Heart left ventricle (tissue), 16 donors: ENCODE measurements at regions of chr1 and their contacts with region 1.

Region 1: GRCh38 chr1:174413632-174414031 is 34.1 kb upstream of the GPR52 start:
- DNase-seq: no peak
- ATAC-seq: peak in 3 of 4 donors; percentile 29 to 42 (median 41)
- H3K4me3 ChIP-seq: peak overlapping the region in 3 of 12 donors; percentile 1 to 34 (median 24)
- H3K27ac ChIP-seq: no peak overlapping the region
- H3K4me1 ChIP-seq: peaks cover 0 to 5% (median 0%) of the 10 kb centered on the region in 12 donors
- H3K27me3 ChIP-seq: no peaks in the 10 kb centered on the region
- CTCF ChIP-seq: peak in 10 of 12 donors; percentile 5 to 48 (median 28)
- POLR2A ChIP-seq: no peak

Region 2: GRCh38 chr1:174217787-174218574 is 195.7 kb before region 1 on chr1:
- intact Hi-C with region 1: no loop called
- DNase-seq: no peak
- ATAC-seq: peak in 2 of 4 donors; percentile 62 to 70
- H3K4me3 ChIP-seq: no peak overlapping the region
- H3K27ac ChIP-seq: peak overlapping the region in 2 of 12 donors; percentile 5 to 34
- H3K4me1 ChIP-seq: peaks cover 0 to 19% (median 3%) of the 10 kb centered on the region in 12 donors
- H3K27me3 ChIP-seq: no peaks in the 10 kb centered on the region
- CTCF ChIP-seq: peak; percentile 62 to 86 (median 76)
- POLR2A ChIP-seq: no peak

Region 3: DNA sequence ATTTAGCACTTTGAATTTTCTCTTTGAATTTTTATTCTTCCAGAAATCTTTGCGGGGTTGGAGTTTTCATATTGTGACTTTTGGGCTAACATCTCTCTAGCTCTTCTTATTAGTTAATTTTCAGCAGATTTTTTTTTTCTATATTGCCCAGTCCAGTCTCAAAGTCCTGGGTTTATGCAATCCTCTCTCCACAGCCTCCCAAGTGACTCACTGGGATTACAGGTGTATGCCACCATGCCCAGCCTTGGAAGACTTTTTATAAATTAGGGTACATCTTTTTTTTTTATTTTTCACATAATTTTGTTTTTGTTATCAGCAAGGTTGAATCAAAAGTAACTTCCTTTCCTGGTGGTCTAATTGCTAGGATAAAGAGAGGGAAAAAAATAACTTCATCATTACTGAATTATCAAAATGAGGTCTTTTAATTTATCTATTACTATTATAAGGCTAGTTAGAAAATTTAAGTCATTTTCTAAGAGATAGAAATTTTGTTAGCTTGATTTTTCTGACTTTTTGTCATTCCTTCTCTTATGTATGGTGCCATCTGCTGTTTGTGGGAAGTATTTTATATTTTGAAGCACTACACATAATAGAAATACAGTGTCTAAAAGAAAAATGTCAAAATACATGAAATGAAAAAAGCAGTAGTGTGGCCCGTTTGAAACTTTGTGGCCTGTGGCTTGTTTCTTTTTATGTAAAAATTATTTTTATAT is 312.7 kb after region 1 on chr1:
- intact Hi-C with region 1: loop called in 7 of 10 experiments (anchors 10 kb)
- DNase-seq: no peak
- ATAC-seq: no peak
- H3K4me3 ChIP-seq: no peak overlapping the region
- H3K27ac ChIP-seq: no peak overlapping the region
- H3K4me1 ChIP-seq: peaks cover 0 to 4% (median 0%) of the 10 kb centered on the region in 12 donors
- H3K27me3 ChIP-seq: no peaks in the 10 kb centered on the region
- CTCF ChIP-seq: peak; percentile 22 to 68 (median 55)
- POLR2A ChIP-seq: no peak

Region 4: GRCh38 chr1:174736831-174737230 is 323.2 kb after region 1 on chr1:
- intact Hi-C with region 1: loop called in 2 of 10 experiments (anchors 10 kb)
- DNase-seq: no peak
- ATAC-seq: no peak
- H3K4me3 ChIP-seq: no peak overlapping the region
- H3K27ac ChIP-seq: no peak overlapping the region
- H3K4me1 ChIP-seq: peaks cover 0 to 6% (median 0%) of the 10 kb centered on the region in 12 donors
- H3K27me3 ChIP-seq: no peaks in the 10 kb centered on the region
- CTCF ChIP-seq: no peak
- POLR2A ChIP-seq: no peak